Common myeloid progenitor, CD34-positive (primary cell): ENCODE measurements at regions of chr1 and their contacts with region 1.

Region 1: DNA sequence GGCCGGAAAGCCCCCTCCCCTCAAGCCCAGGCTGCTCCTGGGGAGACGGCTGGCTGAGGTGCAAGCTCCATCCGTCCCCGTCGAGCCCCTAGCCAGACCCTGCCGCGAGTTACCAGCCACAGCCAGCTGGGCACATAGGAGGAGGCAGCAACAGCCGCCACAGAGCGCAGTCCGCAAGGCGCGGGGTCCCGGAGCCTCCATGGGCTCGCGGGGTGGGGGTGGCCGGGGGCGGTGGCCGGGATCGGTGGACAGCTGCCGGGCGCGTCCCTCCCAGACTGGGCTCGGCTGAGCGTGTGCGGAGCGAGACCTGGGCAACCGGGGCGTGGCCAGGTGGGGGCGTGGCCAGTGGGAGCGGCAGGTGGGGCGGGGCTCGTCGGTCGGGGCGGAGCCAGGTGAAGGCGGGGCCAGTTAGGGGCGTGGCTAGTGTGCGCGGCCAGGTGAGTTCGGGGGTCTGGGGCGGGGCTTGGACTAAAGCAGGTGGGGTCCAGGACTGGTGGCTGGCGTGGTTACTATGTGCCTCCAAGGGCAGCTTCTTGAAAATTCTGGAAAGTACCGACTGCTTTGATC is at the start of gene CD164L2:
- DNase-seq: peak in 1 of 3 donors; percentile 40
- H3K4me3 ChIP-seq: no peak within 1 kb of the TSS
- H3K27ac ChIP-seq: no peak within 1 kb of the TSS
- H3K4me1 ChIP-seq: peaks cover 0 to 7% (median 5%) of the 10 kb centered on the region in 4 experiments
- H3K27me3 ChIP-seq: peaks cover 0 to 4% (median 0%) of the 10 kb centered on the region in 5 experiments

Region 2: GRCh38 chr1:27372808-27373690 is 10.1 kb before region 1 on chr1:
- CTCF ChIA-PET with region 1: interaction called, 13 read pairs
- POLR2A ChIA-PET with region 1: no interaction called
- DNase-seq: no peak
- H3K4me3 ChIP-seq: no peak overlapping the region
- H3K27ac ChIP-seq: no peak overlapping the region
- H3K4me1 ChIP-seq: peaks cover 6 to 24% (median 22%) of the 10 kb centered on the region in 4 experiments
- H3K27me3 ChIP-seq: no peaks in the 10 kb centered on the region

Region 3: GRCh38 chr1:27445177-27445936 is 62.2 kb after region 1 on chr1:
- CTCF ChIA-PET with region 1: no interaction called
- POLR2A ChIA-PET with region 1: no interaction called
- DNase-seq: no peak
- H3K4me3 ChIP-seq: no peak overlapping the region
- H3K27ac ChIP-seq: no peak overlapping the region
- H3K4me1 ChIP-seq: peaks cover 0 to 3% (median 0%) of the 10 kb centered on the region in 4 experiments
- H3K27me3 ChIP-seq: no peaks in the 10 kb centered on the region

Region 4: DNA sequence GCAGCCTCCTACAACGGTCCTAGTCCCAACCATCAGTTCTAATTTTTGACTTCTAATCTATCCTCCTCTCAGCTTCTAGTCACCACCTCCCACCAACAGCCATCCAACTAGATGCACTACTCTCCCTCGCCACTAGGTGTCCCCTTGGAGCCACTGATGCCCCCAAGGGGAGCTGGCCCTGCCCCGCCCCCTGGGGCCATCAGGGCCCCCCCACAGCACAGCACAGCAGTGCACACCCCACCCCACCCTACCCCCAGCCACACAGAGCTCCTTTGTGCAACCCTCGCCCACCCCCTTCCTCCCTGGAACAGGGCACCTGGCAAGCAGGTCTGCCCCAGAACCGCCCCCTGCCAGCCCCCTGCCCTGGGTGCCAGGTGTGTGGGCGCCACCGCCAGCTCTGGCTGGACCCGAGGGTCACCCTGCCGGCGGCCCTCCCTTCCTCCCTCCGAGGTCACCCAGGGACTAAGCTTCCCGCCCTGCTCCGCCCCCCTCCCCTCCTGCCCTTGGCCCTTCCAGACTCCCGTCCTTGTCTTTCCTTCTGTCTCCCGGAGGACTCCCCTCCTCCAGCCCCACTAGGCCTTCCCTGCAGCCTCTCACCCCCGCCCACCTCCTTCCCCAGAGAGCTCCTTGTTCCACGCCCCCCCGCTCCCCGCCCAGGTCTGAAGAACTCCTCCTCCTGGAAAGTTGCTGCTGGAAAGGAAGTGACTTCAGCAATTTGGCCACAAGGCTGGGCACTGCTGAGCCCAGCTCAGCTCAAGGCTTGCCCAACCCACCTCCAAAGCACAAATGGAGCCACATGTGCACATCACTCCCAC is 173.9 kb after region 1 on chr1:
- CTCF ChIA-PET with region 1: no interaction called
- POLR2A ChIA-PET with region 1: no interaction called
- DNase-seq: peak; percentile 67 to 86 (median 84)
- H3K4me3 ChIP-seq: no peak overlapping the region
- H3K27ac ChIP-seq: peak overlapping the region in 1 of 2 experiments; percentile 36
- H3K4me1 ChIP-seq: peaks cover 4 to 69% (median 58%) of the 10 kb centered on the region in 4 experiments
- H3K27me3 ChIP-seq: no peaks in the 10 kb centered on the region